ENCODE measurements at regions of chr3 and their contacts with region 1.

Region 1: GRCh38 chr3:4350789-4351163 is 47.6 kb downstream of the SETMAR start:
- DNase-seq: peak in 2 of 10 donors; percentile 34 to 45
- H3K4me3 ChIP-seq: peak overlapping the region in 26 of 59 donors; percentile 1 to 48 (median 22)
- H3K27ac ChIP-seq: peak overlapping the region in 24 of 59 donors; percentile 8 to 69 (median 36)
- H3K27me3 ChIP-seq: no peaks in the 10 kb centered on the region
- CTCF ChIP-seq: peak; percentile 74 to 96 (median 84)

Region 2: DNA sequence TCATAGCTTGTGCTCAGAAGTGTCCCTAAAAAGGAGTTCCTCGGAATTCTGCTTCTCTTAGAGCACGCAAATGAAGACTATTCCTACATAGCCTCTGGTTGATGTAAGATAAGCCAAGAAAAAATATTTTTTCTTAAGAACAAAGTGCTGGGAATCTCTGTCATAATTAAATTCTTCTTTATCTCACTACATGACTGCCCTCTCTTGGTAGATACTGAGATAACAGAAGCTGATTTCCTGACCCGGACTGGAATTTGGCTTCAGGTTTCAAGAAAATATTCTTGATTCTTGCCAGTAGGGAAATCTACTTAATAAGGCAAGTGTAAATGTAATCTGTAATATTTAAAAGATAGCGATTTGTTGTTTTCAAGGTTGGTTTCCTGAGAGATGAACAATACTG is 78.9 kb before region 1 on chr3:
- intact Hi-C with region 1: no loop called
- DNase-seq: no peak
- H3K4me3 ChIP-seq: no peak overlapping the region
- H3K27ac ChIP-seq: no peak overlapping the region
- H3K27me3 ChIP-seq: no peaks in the 10 kb centered on the region
- CTCF ChIP-seq: peak; percentile 29 to 78 (median 62)

Region 3: GRCh38 chr3:4466741-4467521 is 116.2 kb after region 1 on chr3 and contains the start of gene SUMF1:
- intact Hi-C with region 1: loop called in 1 of 2 experiments (anchors 10 kb)
- DNase-seq: peak; percentile 82 to 93 (median 89)
- H3K4me3 ChIP-seq: peak within 1 kb of the TSS; percentile 66 to 100 (median 92)
- H3K27ac ChIP-seq: peak within 1 kb of the TSS; percentile 5 to 91 (median 79)
- H3K27me3 ChIP-seq: no peaks in the 10 kb centered on the region
- CTCF ChIP-seq: peak in 20 of 56 donors; percentile 7 to 37 (median 27)
- total RNA-seq, gene SUMF1: 12.4 to 26.6 (median 17.6) TPM

Region 4: GRCh38 chr3:4533489-4534443 is 183.0 kb after region 1 on chr3:
- intact Hi-C with region 1: no loop called
- DNase-seq: peak in 1 of 10 donors; percentile 6
- H3K4me3 ChIP-seq: peak overlapping the region in 5 of 59 donors; percentile 2 to 14 (median 11)
- H3K27ac ChIP-seq: peak overlapping the region in 46 of 59 donors; percentile 0 to 80 (median 52)
- H3K27me3 ChIP-seq: no peaks in the 10 kb centered on the region
- CTCF ChIP-seq: no peak

Region 5: DNA sequence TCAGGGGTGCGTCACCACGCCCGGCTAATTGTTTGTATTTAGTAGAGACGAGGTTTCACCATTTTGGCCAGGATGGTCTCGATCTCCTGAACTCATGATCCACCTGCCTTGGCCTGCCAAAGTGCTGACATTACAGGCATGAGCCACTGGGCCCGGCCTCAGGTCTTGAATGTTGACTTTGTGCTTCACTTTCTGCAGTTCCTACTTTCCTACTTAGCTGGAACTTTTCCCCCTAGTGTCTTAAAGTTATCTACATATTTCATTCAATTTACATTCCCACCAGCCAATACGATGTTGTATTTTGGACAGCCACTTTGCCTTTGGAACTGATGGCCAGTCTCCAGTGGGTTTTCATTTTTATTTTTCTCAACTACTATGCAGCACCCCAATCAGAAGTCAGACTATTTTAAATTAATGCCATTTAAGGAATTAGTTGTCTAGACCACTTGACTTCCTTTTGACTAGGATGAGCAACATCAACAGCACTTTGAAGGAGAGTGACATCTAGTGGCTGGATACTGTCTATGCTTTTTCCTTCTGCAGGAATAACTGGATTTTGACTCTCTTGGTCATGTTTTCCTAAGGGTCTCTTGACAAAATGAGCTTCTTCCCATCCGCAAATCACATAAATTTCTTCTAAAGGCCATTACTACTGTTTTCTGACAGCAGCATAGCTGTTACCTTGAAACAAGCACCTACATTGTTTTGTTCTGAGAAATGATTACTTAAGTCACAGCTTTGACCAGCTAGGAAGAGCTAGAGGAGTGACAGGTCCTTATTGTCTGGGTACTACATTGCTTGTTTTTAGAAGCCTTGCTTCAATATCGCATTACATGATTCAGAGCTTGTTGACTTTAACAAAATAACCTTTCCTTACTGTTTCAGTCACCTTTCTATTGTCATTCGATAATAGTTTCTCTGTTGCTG is 282.6 kb after region 1 on chr3:
- intact Hi-C with region 1: loop called (anchors 1 to 2 kb)
- DNase-seq: no peak
- H3K4me3 ChIP-seq: no peak overlapping the region
- H3K27ac ChIP-seq: no peak overlapping the region
- H3K27me3 ChIP-seq: no peaks in the 10 kb centered on the region
- CTCF ChIP-seq: peak; percentile 65 to 93 (median 84)

Measured in dorsolateral prefrontal cortex (tissue), 120 donors.